CD4-positive, alpha-beta memory T cell (primary cell): ENCODE measurements at regions of chr7 and their contacts with region 1.

Region 1: GRCh38 chr7:6706677-6707544 is at the start of gene ZNF12:
- DNase-seq: peak; percentile 92 to 94 (median 92)
- H3K4me3 ChIP-seq: peak within 1 kb of the TSS; percentile 59 to 71
- H3K4me3 Mint-ChIP-seq: peak within 1 kb of the TSS; percentile 90 to 96 (median 94)
- H3K27ac ChIP-seq: peak within 1 kb of the TSS; percentile 81
- H3K27ac Mint-ChIP-seq: peak within 1 kb of the TSS; percentile 90 to 95 (median 94)
- H3K4me1 ChIP-seq: peaks cover 39% of the 10 kb centered on the region
- H3K4me1 Mint-ChIP-seq: peaks cover 32 to 50% (median 40%) of the 10 kb centered on the region in 4 donors
- H3K27me3 ChIP-seq: no peaks in the 10 kb centered on the region
- H3K27me3 Mint-ChIP-seq: no peaks in the 10 kb centered on the region
- total RNA-seq, gene ZNF12: 48.0 to 49.6 TPM

Region 2: DNA sequence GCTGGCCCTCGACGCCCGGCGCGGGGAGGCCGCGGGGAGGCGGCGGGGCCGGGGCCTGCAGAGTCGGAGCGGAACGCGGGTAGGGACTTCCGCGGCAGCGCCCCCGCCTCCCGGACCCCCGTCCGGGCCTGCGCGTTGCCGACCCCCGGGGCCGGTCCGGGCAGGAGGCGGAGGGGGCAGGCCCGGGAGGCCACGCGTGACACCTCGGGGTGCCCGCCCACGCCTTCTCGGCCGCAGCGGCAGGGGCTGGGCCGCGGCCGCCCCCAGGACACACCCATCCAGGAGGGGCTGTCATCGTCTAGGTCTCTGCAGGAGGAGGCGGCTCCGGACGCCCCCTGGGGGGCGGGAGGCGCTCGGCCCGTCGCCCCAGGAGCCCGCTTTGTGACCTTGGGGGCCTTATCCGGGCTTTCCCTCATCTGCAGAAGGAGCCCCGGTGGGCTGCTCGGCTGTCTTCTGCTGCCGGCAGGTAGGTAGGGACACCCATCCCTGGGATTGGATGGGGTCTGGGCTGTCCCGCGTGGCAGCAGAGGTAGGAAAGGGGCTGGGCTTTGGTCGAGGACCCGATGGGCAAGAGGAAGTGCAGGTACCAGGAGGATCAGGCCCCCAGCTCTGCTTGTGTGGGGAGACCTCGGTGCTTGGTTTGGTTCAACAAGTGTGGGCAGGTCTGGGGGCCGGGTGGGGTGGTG is 69.2 kb before region 1 on chr7:
- CTCF ChIA-PET with region 1: no interaction called
- POLR2A ChIA-PET with region 1: interaction called, 3 read pairs
- intact Hi-C with region 1: loop called (anchors 2 kb)
- DNase-seq: peak; percentile 45 to 65 (median 50)
- H3K4me3 ChIP-seq: peak overlapping the region in 1 of 2 donors; percentile 38
- H3K4me3 Mint-ChIP-seq: peak overlapping the region; percentile 84 to 90 (median 88)
- H3K27ac ChIP-seq: peak overlapping the region; percentile 56
- H3K27ac Mint-ChIP-seq: peak overlapping the region; percentile 73 to 95 (median 90)
- H3K4me1 ChIP-seq: peaks cover 20% of the 10 kb centered on the region
- H3K4me1 Mint-ChIP-seq: peaks cover 13 to 28% (median 24%) of the 10 kb centered on the region in 4 donors
- H3K27me3 ChIP-seq: no peaks in the 10 kb centered on the region
- H3K27me3 Mint-ChIP-seq: no peaks in the 10 kb centered on the region

Region 3: GRCh38 chr7:6729492-6730342 is 22.8 kb after region 1 on chr7:
- CTCF ChIA-PET with region 1: no interaction called
- POLR2A ChIA-PET with region 1: interaction called, 7 read pairs
- intact Hi-C with region 1: loop called (anchors 1 kb)
- DNase-seq: peak; percentile 74 to 78 (median 76)
- H3K4me3 ChIP-seq: peak overlapping the region; percentile 76 to 85
- H3K4me3 Mint-ChIP-seq: peak overlapping the region; percentile 90 to 96 (median 94)
- H3K27ac ChIP-seq: peak overlapping the region; percentile 87
- H3K27ac Mint-ChIP-seq: peak overlapping the region; percentile 83 to 95 (median 93)
- H3K4me1 ChIP-seq: peaks cover 11% of the 10 kb centered on the region
- H3K4me1 Mint-ChIP-seq: peaks cover 14 to 40% (median 27%) of the 10 kb centered on the region in 4 donors
- H3K27me3 ChIP-seq: no peaks in the 10 kb centered on the region
- H3K27me3 Mint-ChIP-seq: no peaks in the 10 kb centered on the region

Region 4: DNA sequence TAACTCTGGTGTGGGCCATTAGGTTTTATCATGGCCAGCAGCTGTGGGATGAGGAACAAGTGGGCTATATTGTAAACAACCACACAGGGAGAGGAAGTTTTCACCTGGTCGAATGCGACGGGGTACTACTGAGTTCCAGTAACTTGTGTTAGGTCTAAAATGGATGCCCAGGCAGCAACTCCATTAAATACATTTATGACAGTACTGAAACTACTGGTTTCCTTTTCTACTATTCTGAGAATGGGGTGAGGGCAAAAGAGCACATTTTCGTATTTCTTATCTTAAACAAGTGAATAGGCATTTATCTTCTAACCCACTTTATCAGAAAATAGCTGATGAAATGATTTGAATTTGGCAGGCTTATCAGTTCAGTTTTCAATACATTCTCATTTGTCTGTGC is 585.2 kb after region 1 on chr7:
- CTCF ChIA-PET with region 1: no interaction called
- POLR2A ChIA-PET with region 1: no interaction called
- intact Hi-C with region 1: no loop called
- DNase-seq: no peak
- H3K4me3 ChIP-seq: no peak overlapping the region
- H3K4me3 Mint-ChIP-seq: no peak overlapping the region
- H3K27ac ChIP-seq: no peak overlapping the region
- H3K27ac Mint-ChIP-seq: no peak overlapping the region
- H3K4me1 ChIP-seq: no peaks in the 10 kb centered on the region
- H3K4me1 Mint-ChIP-seq: peaks cover 0 to 2% (median 0%) of the 10 kb centered on the region in 4 donors
- H3K27me3 ChIP-seq: no peaks in the 10 kb centered on the region
- H3K27me3 Mint-ChIP-seq: no peaks in the 10 kb centered on the region